ENCODE measurements at regions of chr3 and their contacts with region 1.

Region 1: DNA sequence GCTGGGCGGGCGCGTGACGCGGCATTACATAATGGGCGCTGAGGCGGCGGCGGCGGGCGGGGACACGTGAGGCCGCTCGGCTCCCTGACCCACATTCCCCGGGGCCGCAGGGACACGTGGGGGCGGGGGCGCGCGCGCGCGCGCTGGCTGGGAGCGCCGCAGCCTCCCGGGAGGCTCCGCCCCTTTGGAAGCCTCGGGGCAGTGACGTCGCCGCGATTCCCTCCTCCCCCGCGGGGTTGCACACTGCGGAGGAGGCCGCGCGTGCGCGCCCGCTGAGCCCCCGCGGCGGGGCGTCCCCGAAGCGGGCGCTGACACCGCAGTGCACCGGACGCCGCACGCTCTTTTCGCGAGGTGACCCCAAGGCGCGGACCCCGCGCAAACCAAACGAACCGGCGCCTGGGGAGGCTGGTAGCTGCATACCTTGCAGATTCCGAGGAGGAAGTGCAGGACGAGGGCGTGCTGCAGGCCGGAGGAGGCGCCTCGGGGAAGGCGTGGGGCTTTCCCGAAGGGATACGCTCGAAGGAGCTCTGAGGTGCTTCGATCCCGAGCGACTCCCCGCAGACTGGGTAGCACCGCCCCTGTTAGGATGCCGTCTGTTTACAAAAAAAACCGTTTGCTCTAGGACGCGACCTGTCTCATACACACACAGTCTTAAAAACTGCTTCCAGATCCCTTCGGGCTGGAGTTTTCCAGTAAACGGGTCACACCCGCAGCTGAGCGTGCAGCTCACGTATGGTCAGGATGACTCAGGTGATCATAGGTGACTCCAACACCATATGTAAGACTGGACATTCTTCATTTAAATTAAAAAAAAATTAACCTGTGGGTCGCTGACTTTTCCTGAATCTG is 1.0 kb downstream of the NR1D2 start:
- DNase-seq: peak; percentile 90
- H3K4me3 Mint-ChIP-seq: peak overlapping the region; percentile 85
- H3K27ac Mint-ChIP-seq: peak overlapping the region; percentile 86
- H3K4me1 Mint-ChIP-seq: peaks cover 26% of the 10 kb centered on the region
- H3K27me3 Mint-ChIP-seq: peaks cover 24% of the 10 kb centered on the region

Region 2: DNA sequence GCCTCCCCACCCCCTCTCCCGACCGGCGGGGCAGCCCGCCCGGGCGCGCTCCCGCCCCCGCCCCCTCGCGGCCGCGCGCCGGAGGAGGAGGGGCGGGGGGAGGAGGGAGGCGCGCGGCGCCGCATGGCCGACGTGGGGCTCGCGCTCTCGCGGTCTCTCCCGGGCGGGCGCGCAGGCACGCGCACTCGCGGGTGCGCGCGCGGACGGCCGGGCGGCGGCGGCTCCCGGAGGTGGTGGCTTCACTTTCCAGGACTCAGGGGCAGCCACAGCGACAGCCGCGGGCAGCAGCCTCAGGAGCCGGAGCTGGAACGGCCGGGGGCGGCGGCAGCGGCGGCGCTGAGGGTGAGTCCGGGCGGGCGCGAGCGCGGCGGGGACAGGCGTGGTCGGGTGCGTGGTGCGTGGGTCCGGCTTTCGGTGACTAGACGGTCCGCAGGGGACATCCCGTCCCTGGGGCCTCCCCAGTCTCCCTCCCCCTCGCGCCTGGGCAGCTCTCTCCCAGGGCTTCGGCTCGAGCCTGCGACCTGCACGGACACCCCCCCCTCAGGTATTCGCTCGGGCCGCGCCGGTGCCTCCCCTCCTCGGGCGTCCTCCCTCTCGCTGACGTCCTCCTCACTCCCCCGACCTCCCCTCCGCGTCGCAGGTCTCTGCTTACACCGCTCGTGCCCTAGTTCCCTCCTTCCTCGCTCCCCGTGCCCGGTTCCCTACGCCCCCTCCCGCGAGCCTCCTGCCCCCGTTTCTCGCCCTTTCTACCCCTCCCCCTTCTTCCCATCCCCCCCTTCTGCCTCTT is 743.0 kb before region 1 on chr3 and contains the start of gene UBE2E2:
- intact Hi-C with region 1: loop called (anchors 2 kb)
- DNase-seq: peak; percentile 47
- H3K4me3 Mint-ChIP-seq: peak within 1 kb of the TSS; percentile 91
- H3K27ac Mint-ChIP-seq: peak within 1 kb of the TSS; percentile 78
- H3K4me1 Mint-ChIP-seq: peaks cover 33% of the 10 kb centered on the region
- H3K27me3 Mint-ChIP-seq: peaks cover 40% of the 10 kb centered on the region
- total RNA-seq, gene UBE2E2: 11.8 and 13.9 TPM in 2 replicates

Region 3: DNA sequence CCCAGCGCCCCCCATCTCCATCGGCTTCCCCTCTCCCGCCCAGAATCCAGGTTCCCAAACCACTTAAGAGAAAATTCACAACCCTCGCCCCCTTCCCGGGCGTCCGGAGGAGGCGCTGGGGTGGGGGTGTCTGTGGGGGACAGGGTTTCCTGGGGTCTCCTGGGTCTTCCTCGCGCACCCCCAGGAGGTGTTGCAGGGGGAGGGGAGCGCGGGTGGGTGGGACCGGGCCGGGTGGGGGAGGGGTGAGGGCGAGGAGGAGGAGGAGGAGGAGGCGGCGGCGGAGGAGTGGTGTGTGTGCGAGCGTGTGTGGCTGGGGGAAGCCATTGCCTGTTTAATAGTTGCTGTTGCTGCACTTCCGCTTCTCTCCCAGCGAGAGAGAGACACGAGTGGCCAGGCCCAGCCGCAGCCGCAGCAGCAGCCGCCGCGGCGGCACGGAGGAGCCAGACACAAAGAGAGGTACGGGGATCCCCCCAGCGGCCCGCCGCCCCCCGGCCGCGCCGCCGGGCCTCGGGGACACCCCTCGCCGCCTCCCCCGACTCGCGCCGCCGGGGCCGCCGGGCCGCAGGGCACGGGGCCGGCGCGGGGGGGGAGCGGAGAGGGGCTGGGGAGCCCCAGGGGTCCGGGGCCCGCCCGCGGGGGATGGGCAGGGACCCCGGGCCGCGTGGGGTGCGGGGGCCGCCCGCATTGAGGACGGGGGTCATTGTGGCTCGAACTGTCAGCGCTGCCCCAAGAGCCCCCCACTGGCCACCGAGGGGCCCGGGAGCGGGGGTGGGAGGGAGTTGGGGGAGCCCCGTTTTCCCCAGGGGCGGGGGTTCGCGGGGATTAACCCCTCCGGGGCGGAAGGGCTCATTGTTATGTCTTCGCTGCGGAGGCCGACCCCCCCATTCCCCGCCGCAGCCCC is 140.2 kb before region 1 on chr3 and contains the start of gene UBE2E1:
- intact Hi-C with region 1: loop called (anchors 1 kb)
- DNase-seq: peak; percentile 53
- H3K4me3 Mint-ChIP-seq: peak within 1 kb of the TSS; percentile 95
- H3K27ac Mint-ChIP-seq: peak within 1 kb of the TSS; percentile 96
- H3K4me1 Mint-ChIP-seq: peaks cover 49% of the 10 kb centered on the region
- H3K27me3 Mint-ChIP-seq: peaks cover 33% of the 10 kb centered on the region
- total RNA-seq, gene UBE2E1: 78.8 and 87.0 TPM in 2 replicates

Region 4: GRCh38 chr3:23888617-23889228 is 57.4 kb before region 1 on chr3:
- intact Hi-C with region 1: loop called (anchors 2 kb)
- DNase-seq: no peak
- H3K4me3 Mint-ChIP-seq: no peak overlapping the region
- H3K27ac Mint-ChIP-seq: no peak overlapping the region
- H3K4me1 Mint-ChIP-seq: no peaks in the 10 kb centered on the region
- H3K27me3 Mint-ChIP-seq: no peaks in the 10 kb centered on the region

Region 5: GRCh38 chr3:23932571-23932970 is 13.6 kb before region 1 on chr3:
- intact Hi-C with region 1: no loop called
- DNase-seq: no peak
- H3K4me3 Mint-ChIP-seq: no peak overlapping the region
- H3K27ac Mint-ChIP-seq: no peak overlapping the region
- H3K4me1 Mint-ChIP-seq: no peaks in the 10 kb centered on the region
- H3K27me3 Mint-ChIP-seq: peaks cover 9% of the 10 kb centered on the region

Region 6: GRCh38 chr3:23959135-23959900 is 13.2 kb after region 1 on chr3:
- intact Hi-C with region 1: loop called (anchors 1 kb)
- DNase-seq: no peak
- H3K4me3 Mint-ChIP-seq: no peak overlapping the region
- H3K27ac Mint-ChIP-seq: peak overlapping the region; percentile 55
- H3K4me1 Mint-ChIP-seq: peaks cover 9% of the 10 kb centered on the region
- H3K27me3 Mint-ChIP-seq: peaks cover 2% of the 10 kb centered on the region

Measured in activated T-helper 1 cell treated with anti-CD3 and anti-CD28 coated beads, Interleukin-12 subunit alpha, Interleukin-12 subunit beta, Interleukin-2, Interleukin-4 antibody, amounts not matched to agents 30 ng/mL and 10 ng/mL and 1 ng/mL, durations not matched to agents 14 hours and 24 hours and 36 hours (primary cell).